HAP-1 (cell line): ENCODE measurements at regions of chr15 and their contacts with region 1.

Region 1: DNA sequence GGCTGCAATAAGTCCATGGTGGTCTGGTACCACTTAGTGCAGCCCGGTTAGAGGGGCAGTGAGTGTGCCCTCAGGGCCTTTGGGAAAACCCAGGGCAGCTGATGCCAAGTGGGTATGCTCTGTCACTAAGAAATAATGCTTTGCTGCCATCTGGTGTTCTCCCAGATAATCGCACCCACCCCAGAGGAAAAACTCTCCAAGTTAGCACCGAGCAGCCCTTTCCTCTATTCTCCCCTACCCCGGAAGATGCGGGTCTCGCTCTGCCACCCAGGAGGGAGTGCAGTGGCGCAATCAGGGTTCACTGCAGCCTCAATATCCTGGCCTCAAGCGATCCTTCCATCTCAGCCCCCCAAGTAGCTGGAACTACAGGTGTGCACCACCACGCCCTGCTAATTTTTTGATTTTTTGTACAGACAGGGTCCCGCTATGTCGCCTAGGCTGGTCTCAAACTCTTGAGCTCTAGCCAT is 21.3 kb upstream of the DAPK2 start:
- DNase-seq: peak; percentile 90 to 92
- H3K4me3 ChIP-seq: no peak overlapping the region
- H3K4me1 ChIP-seq: no peaks in the 10 kb centered on the region
- H3K27me3 ChIP-seq: no peaks in the 10 kb centered on the region

Region 2: DNA sequence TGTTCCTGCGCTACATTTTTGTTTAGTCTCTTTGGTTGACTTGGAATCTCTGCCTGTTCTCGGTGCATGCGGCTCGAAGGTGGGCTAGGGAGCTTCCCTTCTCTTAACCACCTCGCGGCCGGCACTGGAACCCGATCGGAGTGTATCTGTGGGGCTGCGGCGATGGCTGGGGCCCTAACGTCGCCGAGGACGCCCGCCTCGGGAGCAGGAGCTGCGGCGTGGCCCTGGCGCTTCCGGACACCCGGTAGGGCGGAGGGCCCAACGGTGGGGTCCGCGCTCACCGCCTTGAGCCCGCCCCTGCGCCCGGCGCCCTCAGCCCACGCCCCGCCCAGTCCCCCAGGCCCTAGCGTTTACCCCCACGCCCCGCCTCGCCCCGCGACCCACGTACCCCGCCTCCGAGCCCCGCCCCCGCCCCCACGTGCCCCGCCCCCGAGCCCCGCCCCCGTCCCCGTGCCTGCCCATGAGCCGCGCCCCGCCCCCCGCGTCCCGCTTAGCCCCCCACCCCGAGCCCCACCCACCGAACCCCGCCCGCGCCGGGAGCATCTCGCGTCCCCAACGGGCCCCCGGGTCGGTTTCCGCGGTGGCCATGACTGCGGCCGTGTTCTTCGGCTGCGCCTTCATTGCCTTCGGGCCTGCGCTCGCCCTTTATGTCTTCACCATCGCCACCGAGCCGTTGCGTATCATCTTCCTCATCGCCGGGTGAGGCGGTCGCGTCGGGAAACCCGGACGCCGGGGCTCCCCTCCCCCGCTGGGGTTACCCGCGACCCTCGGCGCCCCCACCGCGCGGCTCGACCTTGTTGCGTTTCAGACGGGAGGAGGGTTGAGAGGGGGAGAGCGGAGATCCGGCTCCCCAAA is 790.3 kb before region 1 on chr15 and contains the start of gene APH1B:
- in situ Hi-C with region 1: loop called (anchors 25 kb)
- DNase-seq: peak; percentile 90 to 98
- H3K4me3 ChIP-seq: peak within 1 kb of the TSS; percentile 58
- H3K4me1 ChIP-seq: peaks cover 11% of the 10 kb centered on the region
- H3K27me3 ChIP-seq: no peaks in the 10 kb centered on the region

Region 3: GRCh38 chr15:63466378-63467192 is 601.0 kb before region 1 on chr15:
- in situ Hi-C with region 1: loop called (anchors 5 kb)
- DNase-seq: peak; percentile 75
- H3K4me3 ChIP-seq: no peak overlapping the region
- H3K4me1 ChIP-seq: no peaks in the 10 kb centered on the region; the same call in 1 of the 2 replicates
- H3K27me3 ChIP-seq: peaks cover 22% of the 10 kb centered on the region

Region 4: GRCh38 chr15:63605816-63606215 is 461.8 kb before region 1 on chr15:
- in situ Hi-C with region 1: loop called (anchors 5 kb)
- DNase-seq: no peak
- H3K4me3 ChIP-seq: no peak overlapping the region
- H3K4me1 ChIP-seq: peaks cover 13% of the 10 kb centered on the region
- H3K27me3 ChIP-seq: no peaks in the 10 kb centered on the region

Region 5: DNA sequence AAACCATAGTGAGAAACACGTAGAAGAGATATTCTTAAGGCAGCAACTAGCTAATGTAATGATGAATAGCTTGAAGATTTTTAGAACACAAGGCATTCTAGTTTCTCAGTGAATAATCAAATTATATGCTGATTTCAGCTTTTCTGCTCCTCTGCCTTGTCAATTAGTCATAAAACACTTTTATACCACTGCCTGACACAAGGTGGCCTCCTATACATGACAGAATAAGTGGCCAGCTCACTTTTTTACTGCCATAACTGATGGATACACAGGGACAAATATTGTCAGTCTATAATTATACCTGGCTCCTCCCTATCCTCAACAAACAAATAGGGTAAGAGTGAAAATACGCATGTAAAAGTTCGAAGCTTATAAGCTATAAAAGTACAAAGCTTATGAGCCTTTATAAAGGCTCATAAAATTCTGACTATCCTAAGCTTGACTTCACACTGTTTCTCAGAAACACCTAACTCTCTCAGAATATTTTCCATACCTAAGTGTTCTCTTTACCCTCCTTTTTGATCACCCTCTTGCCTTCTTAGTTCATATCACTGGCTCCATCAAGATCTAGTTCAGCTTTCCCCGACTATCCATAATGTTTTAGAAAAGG is 315.4 kb before region 1 on chr15:
- in situ Hi-C with region 1: loop called (anchors 5 kb)
- DNase-seq: peak; percentile 70 to 87
- H3K4me3 ChIP-seq: no peak overlapping the region
- H3K4me1 ChIP-seq: peaks cover 8% of the 10 kb centered on the region
- H3K27me3 ChIP-seq: no peaks in the 10 kb centered on the region